ENCODE measurements at regions of chr1 and their contacts with region 1.

Region 1: GRCh38 chr1:148318123-148318903 is 164.8 kb downstream of the PPIAL4G start:
- DNase-seq: peak in 8 of 9 donors; percentile 24 to 67 (median 48)
- ATAC-seq: peak; percentile 87
- H3K4me3 ChIP-seq: peak overlapping the region; percentile 67
- H3K4me3 Mint-ChIP-seq: peak overlapping the region; percentile 86 to 98 (median 94)
- H3K27ac ChIP-seq: peak overlapping the region; percentile 9
- H3K27ac Mint-ChIP-seq: peak overlapping the region; percentile 41 to 87 (median 66)
- H3K4me1 ChIP-seq: peaks cover 10 to 16% of the 10 kb centered on the region in 2 donors
- H3K4me1 Mint-ChIP-seq: peaks cover 16 to 42% (median 27%) of the 10 kb centered on the region in 7 donors
- H3K27me3 ChIP-seq: no peaks in the 10 kb centered on the region
- H3K27me3 Mint-ChIP-seq: peaks cover 0 to 56% (median 10%) of the 10 kb centered on the region in 5 donors

Region 2: GRCh38 chr1:148263128-148263905 is 55.0 kb before region 1 on chr1:
- CTCF ChIA-PET with region 1: no interaction called
- POLR2A ChIA-PET with region 1: no interaction called
- intact Hi-C with region 1: loop called in 1 of 2 experiments (anchors 5 kb)
- DNase-seq: peak; percentile 27 to 65 (median 51)
- ATAC-seq: peak; percentile 90
- H3K4me3 ChIP-seq: peak overlapping the region; percentile 59
- H3K4me3 Mint-ChIP-seq: peak overlapping the region; percentile 89 to 97 (median 93)
- H3K27ac ChIP-seq: peak overlapping the region; percentile 76
- H3K27ac Mint-ChIP-seq: peak overlapping the region; percentile 88 to 97 (median 93)
- H3K4me1 ChIP-seq: no peaks in the 10 kb centered on the region
- H3K4me1 Mint-ChIP-seq: peaks cover 10 to 23% (median 13%) of the 10 kb centered on the region in 7 donors
- H3K27me3 ChIP-seq: no peaks in the 10 kb centered on the region
- H3K27me3 Mint-ChIP-seq: peaks cover 0 to 50% (median 0%) of the 10 kb centered on the region in 5 donors

Region 3: GRCh38 chr1:148290881-148291280 is 27.4 kb before region 1 on chr1:
- CTCF ChIA-PET with region 1: no interaction called
- POLR2A ChIA-PET with region 1: no interaction called
- intact Hi-C with region 1: no loop called
- DNase-seq: no peak
- ATAC-seq: no peak
- H3K4me3 ChIP-seq: no peak overlapping the region
- H3K4me3 Mint-ChIP-seq: no peak overlapping the region
- H3K27ac ChIP-seq: no peak overlapping the region
- H3K27ac Mint-ChIP-seq: no peak overlapping the region
- H3K4me1 ChIP-seq: no peaks in the 10 kb centered on the region
- H3K4me1 Mint-ChIP-seq: peaks cover 0 to 4% (median 0%) of the 10 kb centered on the region in 7 donors
- H3K27me3 ChIP-seq: no peaks in the 10 kb centered on the region
- H3K27me3 Mint-ChIP-seq: peaks cover 4 to 14% (median 7%) of the 10 kb centered on the region in 5 donors

Region 4: DNA sequence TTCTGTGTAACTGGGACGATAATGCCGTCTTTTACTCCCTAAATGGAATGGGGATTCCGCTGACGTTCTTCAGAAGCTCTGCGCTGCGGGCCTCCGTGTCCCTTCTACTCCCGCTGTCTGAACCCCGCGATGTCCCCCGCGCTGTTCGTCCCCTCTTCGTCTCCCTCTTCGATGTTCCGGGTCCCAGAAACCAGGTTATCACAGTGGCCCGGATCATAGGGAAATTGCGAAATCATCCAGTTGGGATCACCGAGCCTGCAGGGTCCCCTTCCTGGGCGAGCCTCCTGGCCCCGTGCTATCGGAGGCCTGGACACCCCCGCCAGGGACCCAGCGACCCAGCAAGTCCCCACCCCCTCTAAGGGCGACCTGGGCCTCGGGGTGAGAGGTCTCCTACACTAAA is 10.6 kb after region 1 on chr1:
- CTCF ChIA-PET with region 1: no interaction called
- POLR2A ChIA-PET with region 1: interaction called, 7 read pairs
- intact Hi-C with region 1: loop called in 1 of 2 experiments (anchors 1 kb)
- DNase-seq: no peak
- ATAC-seq: no peak
- H3K4me3 ChIP-seq: no peak overlapping the region
- H3K4me3 Mint-ChIP-seq: peak overlapping the region in 2 of 10 donors; percentile 27 to 37
- H3K27ac ChIP-seq: no peak overlapping the region
- H3K27ac Mint-ChIP-seq: no peak overlapping the region
- H3K4me1 ChIP-seq: peaks cover 0 to 2% of the 10 kb centered on the region in 2 donors
- H3K4me1 Mint-ChIP-seq: peaks cover 2 to 11% (median 7%) of the 10 kb centered on the region in 7 donors
- H3K27me3 ChIP-seq: no peaks in the 10 kb centered on the region
- H3K27me3 Mint-ChIP-seq: peaks cover 10 to 61% (median 34%) of the 10 kb centered on the region in 5 donors

Region 5: GRCh38 chr1:148353461-148354283 is 35.4 kb after region 1 on chr1:
- CTCF ChIA-PET with region 1: no interaction called
- POLR2A ChIA-PET with region 1: no interaction called
- intact Hi-C with region 1: loop called in 1 of 2 experiments (anchors 5 kb)
- DNase-seq: peak in 6 of 9 donors; percentile 14 to 55 (median 34)
- ATAC-seq: no peak
- H3K4me3 ChIP-seq: no peak overlapping the region
- H3K4me3 Mint-ChIP-seq: peak overlapping the region in 5 of 10 donors; percentile 31 to 75 (median 49)
- H3K27ac ChIP-seq: no peak overlapping the region
- H3K27ac Mint-ChIP-seq: peak overlapping the region in 1 of 9 donors; percentile 65
- H3K4me1 ChIP-seq: no peaks in the 10 kb centered on the region
- H3K4me1 Mint-ChIP-seq: peaks cover 0 to 27% (median 7%) of the 10 kb centered on the region in 7 donors
- H3K27me3 ChIP-seq: peaks cover 0 to 5% of the 10 kb centered on the region in 2 donors
- H3K27me3 Mint-ChIP-seq: peaks cover 25 to 93% (median 74%) of the 10 kb centered on the region in 5 donors

Measured in naive thymus-derived CD4-positive, alpha-beta T cell (primary cell).